Activated CD8-positive, alpha-beta memory T cell treated with anti-CD3 and anti-CD28 coated beads, Interleukin-2, amount 10 ng/mL, durations not matched to agents 7 days and 5 days (primary cell): ENCODE measurements at regions of chr10 and their contacts with region 1.

Region 1: GRCh38 chr10:50224330-50224952 is 26.9 kb downstream of the ASAH2 start:
- DNase-seq: peak; percentile 58
- ATAC-seq: peak; percentile 92
- H3K4me3 Mint-ChIP-seq: no peak overlapping the region
- H3K27ac Mint-ChIP-seq: no peak overlapping the region
- H3K4me1 Mint-ChIP-seq: peaks cover 4% of the 10 kb centered on the region
- H3K27me3 Mint-ChIP-seq: peaks cover 34% of the 10 kb centered on the region

Region 2: DNA sequence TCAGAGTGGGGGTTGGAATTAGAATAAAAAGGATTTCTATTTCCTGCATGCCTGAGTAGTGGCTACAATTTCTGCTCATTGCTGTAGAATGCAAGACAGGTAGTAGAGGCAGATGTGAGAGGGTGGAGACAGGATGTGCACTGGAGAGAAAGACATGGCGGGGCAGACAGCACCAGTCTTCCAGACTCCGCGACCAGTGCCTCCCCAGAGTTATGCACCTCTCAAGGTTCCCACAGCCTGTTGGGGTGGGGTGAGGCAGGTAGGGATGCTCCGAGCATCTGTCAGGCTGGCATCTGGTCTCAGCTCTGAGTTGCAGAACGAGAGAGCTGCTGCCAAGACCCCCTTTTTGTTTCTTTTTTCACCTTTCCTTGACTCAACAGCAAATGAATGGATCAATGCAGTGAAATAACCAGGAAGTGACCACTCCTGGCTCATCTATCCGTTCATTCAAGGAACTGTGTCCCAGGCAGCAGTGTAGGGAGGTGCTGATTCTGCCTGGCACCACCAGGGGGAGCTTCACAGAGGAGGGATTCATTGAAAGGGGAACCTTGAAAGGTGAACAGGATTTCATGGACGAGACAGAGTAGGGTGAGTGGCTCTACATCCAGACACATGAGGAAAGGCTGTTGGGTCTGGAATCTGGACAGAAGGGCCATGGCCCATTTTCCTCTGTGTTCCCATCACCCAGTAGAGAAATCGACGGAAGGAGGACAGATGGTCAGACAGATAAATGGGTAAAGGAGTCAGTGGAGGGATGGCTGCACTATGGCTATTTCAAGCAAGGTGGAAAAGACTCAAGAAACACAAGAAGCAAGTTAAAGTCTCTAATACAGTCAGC is 631.5 kb before region 1 on chr10:
- CTCF ChIA-PET with region 1: interaction called, 28 read pairs
- DNase-seq: peak; percentile 70
- ATAC-seq: peak; percentile 75
- H3K4me3 Mint-ChIP-seq: no peak overlapping the region
- H3K27ac Mint-ChIP-seq: no peak overlapping the region
- H3K4me1 Mint-ChIP-seq: no peaks in the 10 kb centered on the region
- H3K27me3 Mint-ChIP-seq: peaks cover 26% of the 10 kb centered on the region

Region 3: GRCh38 chr10:50367732-50368131 is 143.3 kb after region 1 on chr10:
- CTCF ChIA-PET with region 1: no interaction called
- DNase-seq: no peak
- ATAC-seq: no peak
- H3K4me3 Mint-ChIP-seq: no peak overlapping the region
- H3K27ac Mint-ChIP-seq: no peak overlapping the region
- H3K4me1 Mint-ChIP-seq: peaks cover 15% of the 10 kb centered on the region
- H3K27me3 Mint-ChIP-seq: no peaks in the 10 kb centered on the region